ENCODE measurements at regions of chr3 and their contacts with region 1.

Region 1: GRCh38 chr3:129439817-129440617 is at the starts of genes IFT122 and MBD4:
- DNase-seq: peak; percentile 98 to 100 (median 100)
- H3K4me3 ChIP-seq: peak within 1 kb of the TSS; percentile 98 to 100
- H3K4me3 Mint-ChIP-seq: peak within 1 kb of the TSS; percentile 90 to 99 (median 94)
- H3K27ac ChIP-seq: peak within 1 kb of the TSS; percentile 91
- H3K27ac Mint-ChIP-seq: peak within 1 kb of the TSS; percentile 94 to 99 (median 98)
- H3K4me1 ChIP-seq: peaks cover 73% of the 10 kb centered on the region
- H3K4me1 Mint-ChIP-seq: peaks cover 45 to 81% (median 68%) of the 10 kb centered on the region in 4 donors
- H3K27me3 ChIP-seq: no peaks in the 10 kb centered on the region
- H3K27me3 Mint-ChIP-seq: no peaks in the 10 kb centered on the region
- total RNA-seq, gene IFT122: 20.0 to 21.8 TPM
- total RNA-seq, gene MBD4: 52.4 to 58.0 TPM

Region 2: DNA sequence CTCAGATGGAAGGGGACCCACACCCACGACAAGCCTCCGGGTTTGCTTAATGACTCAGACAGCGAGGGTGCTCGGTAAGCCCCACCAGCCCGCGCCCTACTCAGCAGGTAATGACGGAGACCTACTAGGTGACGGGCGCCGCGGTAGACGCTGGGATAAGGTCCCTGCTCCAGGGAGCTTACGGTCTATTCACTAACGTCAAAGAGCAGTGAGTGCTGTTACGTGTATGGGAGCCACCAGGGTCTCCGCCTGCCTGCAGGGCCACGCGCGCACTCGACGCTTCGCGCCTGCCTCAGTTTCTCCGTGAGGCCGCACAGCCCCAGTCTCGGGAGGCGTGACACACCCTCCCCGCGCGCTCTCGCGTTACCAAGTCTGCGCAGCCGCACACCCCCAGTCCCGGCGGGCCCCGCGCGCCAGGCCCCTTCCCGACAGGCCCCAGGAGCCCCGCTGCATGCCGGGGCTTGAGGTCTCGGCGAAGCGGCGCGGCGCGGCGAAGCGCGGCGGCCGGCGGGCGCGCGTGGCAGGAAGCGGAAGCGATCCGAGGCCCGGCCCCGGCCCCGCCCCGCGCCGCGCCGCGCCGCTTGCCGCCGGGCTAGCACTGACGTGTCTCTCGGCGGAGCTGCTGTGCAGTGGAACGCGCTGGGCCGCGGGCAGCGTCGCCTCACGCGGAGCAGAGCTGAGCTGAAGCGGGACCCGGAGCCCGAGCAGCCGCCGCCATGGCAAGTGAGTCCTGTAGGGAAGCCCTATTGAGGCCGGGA is 1388.0 kb before region 1 on chr3 and contains the start of gene SEC61A1:
- CTCF ChIA-PET with region 1: no interaction called
- POLR2A ChIA-PET with region 1: no interaction called
- intact Hi-C with region 1: loop called (anchors 5 kb)
- DNase-seq: peak; percentile 94 to 96 (median 95)
- H3K4me3 ChIP-seq: peak within 1 kb of the TSS; percentile 80 to 91
- H3K4me3 Mint-ChIP-seq: peak within 1 kb of the TSS; percentile 92 to 100 (median 98)
- H3K27ac ChIP-seq: peak within 1 kb of the TSS; percentile 93
- H3K27ac Mint-ChIP-seq: peak within 1 kb of the TSS; percentile 94 to 99 (median 98)
- H3K4me1 ChIP-seq: peaks cover 38% of the 10 kb centered on the region
- H3K4me1 Mint-ChIP-seq: peaks cover 35 to 58% (median 42%) of the 10 kb centered on the region in 4 donors
- H3K27me3 ChIP-seq: no peaks in the 10 kb centered on the region
- H3K27me3 Mint-ChIP-seq: no peaks in the 10 kb centered on the region
- total RNA-seq, gene SEC61A1: 203 to 212 TPM

Region 3: DNA sequence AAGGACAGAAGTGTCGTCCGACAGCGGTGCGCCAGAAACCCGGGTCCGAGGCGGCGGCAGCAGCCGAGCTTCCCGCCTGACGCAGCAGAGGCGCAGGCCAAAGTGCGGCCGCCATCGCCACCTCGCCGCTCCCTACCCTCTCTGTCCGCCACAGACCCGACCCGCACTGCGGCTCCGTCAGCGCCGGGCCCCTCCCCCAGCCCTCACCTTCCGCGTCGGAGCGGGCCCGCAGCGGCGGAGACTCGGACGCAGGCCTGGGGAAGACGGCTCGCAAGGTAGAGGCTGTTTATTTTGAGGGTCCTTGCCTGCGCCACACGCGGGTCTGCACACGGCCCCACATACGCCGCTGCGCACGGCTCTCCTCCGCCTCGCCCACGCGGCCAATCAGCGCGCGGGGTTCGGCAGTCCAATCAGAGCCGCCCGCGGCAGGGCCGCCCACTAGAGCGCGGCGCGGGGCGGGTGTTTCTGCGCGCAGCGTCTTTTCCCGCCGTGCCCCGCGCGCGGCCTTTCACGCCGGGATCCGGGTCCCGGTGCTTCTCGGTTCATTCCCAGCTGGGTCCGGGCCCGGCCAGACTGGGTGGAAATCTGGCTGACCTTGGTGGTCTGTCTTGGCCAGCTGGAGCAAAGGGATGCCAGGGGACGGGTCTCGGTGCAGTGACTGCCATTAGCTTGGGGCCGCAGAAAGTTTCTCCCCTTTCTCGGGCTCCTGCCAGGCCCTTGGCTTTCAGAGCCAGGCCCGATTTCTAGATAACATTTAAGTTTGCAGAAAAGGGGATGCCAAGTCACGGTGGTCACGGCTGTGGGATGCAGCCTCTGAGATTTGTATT is 256.2 kb before region 1 on chr3 and contains the start of gene CNBP:
- CTCF ChIA-PET with region 1: no interaction called
- POLR2A ChIA-PET with region 1: interaction called, 4 read pairs
- intact Hi-C with region 1: loop called (anchors 5 kb)
- DNase-seq: peak; percentile 90 to 95 (median 93)
- H3K4me3 ChIP-seq: peak within 1 kb of the TSS; percentile 51 to 93
- H3K4me3 Mint-ChIP-seq: peak within 1 kb of the TSS; percentile 89 to 99 (median 97)
- H3K27ac ChIP-seq: peak within 1 kb of the TSS; percentile 99
- H3K27ac Mint-ChIP-seq: peak within 1 kb of the TSS; percentile 91 to 99 (median 98)
- H3K4me1 ChIP-seq: peaks cover 41% of the 10 kb centered on the region
- H3K4me1 Mint-ChIP-seq: peaks cover 20 to 55% (median 31%) of the 10 kb centered on the region in 4 donors
- H3K27me3 ChIP-seq: no peaks in the 10 kb centered on the region
- H3K27me3 Mint-ChIP-seq: no peaks in the 10 kb centered on the region
- total RNA-seq, gene CNBP: 369 to 400 TPM

Region 4: GRCh38 chr3:129289201-129289921 is 150.7 kb before region 1 on chr3:
- CTCF ChIA-PET with region 1: no interaction called
- POLR2A ChIA-PET with region 1: no interaction called
- intact Hi-C with region 1: no loop called
- DNase-seq: no peak
- H3K4me3 ChIP-seq: no peak overlapping the region
- H3K4me3 Mint-ChIP-seq: no peak overlapping the region
- H3K27ac ChIP-seq: no peak overlapping the region
- H3K27ac Mint-ChIP-seq: peak overlapping the region in 2 of 7 donors; percentile 62 to 71
- H3K4me1 ChIP-seq: no peaks in the 10 kb centered on the region
- H3K4me1 Mint-ChIP-seq: peaks cover 9 to 13% (median 9%) of the 10 kb centered on the region in 4 donors
- H3K27me3 ChIP-seq: no peaks in the 10 kb centered on the region
- H3K27me3 Mint-ChIP-seq: no peaks in the 10 kb centered on the region

Region 5: GRCh38 chr3:129399145-129399894 is 40.7 kb before region 1 on chr3:
- CTCF ChIA-PET with region 1: interaction called, 9 read pairs
- POLR2A ChIA-PET with region 1: interaction called, 18 read pairs
- intact Hi-C with region 1: loop called (anchors 1 kb)
- DNase-seq: peak; percentile 83 to 88 (median 84)
- H3K4me3 ChIP-seq: peak overlapping the region; percentile 83 to 95
- H3K4me3 Mint-ChIP-seq: peak overlapping the region; percentile 97 to 100 (median 98)
- H3K27ac ChIP-seq: peak overlapping the region; percentile 70
- H3K27ac Mint-ChIP-seq: peak overlapping the region; percentile 98 to 100 (median 99)
- H3K4me1 ChIP-seq: peaks cover 28% of the 10 kb centered on the region
- H3K4me1 Mint-ChIP-seq: peaks cover 21 to 55% (median 32%) of the 10 kb centered on the region in 4 donors
- H3K27me3 ChIP-seq: no peaks in the 10 kb centered on the region
- H3K27me3 Mint-ChIP-seq: no peaks in the 10 kb centered on the region

Region 6: DNA sequence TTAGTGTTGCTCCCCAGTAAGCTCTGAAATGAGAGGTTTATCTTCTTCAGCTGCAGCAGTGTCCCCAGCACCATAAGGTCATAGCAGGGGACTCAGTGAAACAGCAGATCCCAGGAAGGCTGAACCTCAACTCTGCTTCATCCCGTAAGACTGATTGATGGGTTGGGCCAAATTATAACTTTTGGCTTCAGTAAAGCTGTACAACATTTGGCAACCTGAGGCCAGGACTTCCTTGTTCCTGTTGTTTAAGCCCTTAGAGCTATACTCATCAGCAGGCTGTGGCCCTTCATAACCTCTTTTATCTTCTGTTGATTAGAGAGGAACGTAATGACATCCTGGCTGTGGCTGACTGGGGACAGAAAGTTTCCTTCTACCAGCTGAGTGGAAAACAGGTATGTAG is 29.0 kb after region 1 on chr3:
- CTCF ChIA-PET with region 1: no interaction called
- POLR2A ChIA-PET with region 1: interaction called, 10 read pairs
- intact Hi-C with region 1: no loop called
- DNase-seq: peak in 3 of 5 donors; percentile 7 to 28 (median 23)
- H3K4me3 ChIP-seq: no peak overlapping the region
- H3K4me3 Mint-ChIP-seq: no peak overlapping the region
- H3K27ac ChIP-seq: no peak overlapping the region
- H3K27ac Mint-ChIP-seq: peak overlapping the region in 6 of 7 donors; percentile 18 to 77 (median 39)
- H3K4me1 ChIP-seq: peaks cover 13% of the 10 kb centered on the region
- H3K4me1 Mint-ChIP-seq: peaks cover 0 to 14% (median 8%) of the 10 kb centered on the region in 4 donors
- H3K27me3 ChIP-seq: no peaks in the 10 kb centered on the region
- H3K27me3 Mint-ChIP-seq: no peaks in the 10 kb centered on the region

Region 7: GRCh38 chr3:129576514-129577352 is 136.7 kb after region 1 on chr3:
- CTCF ChIA-PET with region 1: no interaction called
- POLR2A ChIA-PET with region 1: interaction called, 30 read pairs
- intact Hi-C with region 1: no loop called
- DNase-seq: peak; percentile 84 to 90 (median 89)
- H3K4me3 ChIP-seq: peak overlapping the region in 1 of 2 donors; percentile 12
- H3K4me3 Mint-ChIP-seq: peak overlapping the region in 7 of 8 donors; percentile 53 to 79 (median 71)
- H3K27ac ChIP-seq: peak overlapping the region; percentile 67
- H3K27ac Mint-ChIP-seq: peak overlapping the region; percentile 90 to 98 (median 98)
- H3K4me1 ChIP-seq: peaks cover 54% of the 10 kb centered on the region
- H3K4me1 Mint-ChIP-seq: peaks cover 17 to 58% (median 39%) of the 10 kb centered on the region in 4 donors
- H3K27me3 ChIP-seq: no peaks in the 10 kb centered on the region
- H3K27me3 Mint-ChIP-seq: no peaks in the 10 kb centered on the region

Region 8: GRCh38 chr3:129893581-129894070 is 453.6 kb after region 1 on chr3 and contains the start of gene TMCC1:
- CTCF ChIA-PET with region 1: no interaction called
- POLR2A ChIA-PET with region 1: interaction called, 4 read pairs
- intact Hi-C with region 1: loop called (anchors 1 kb)
- DNase-seq: peak; percentile 90 to 94 (median 92)
- H3K4me3 ChIP-seq: peak within 1 kb of the TSS; percentile 87 to 96
- H3K4me3 Mint-ChIP-seq: peak within 1 kb of the TSS; percentile 88 to 96 (median 92)
- H3K27ac ChIP-seq: peak within 1 kb of the TSS; percentile 82
- H3K27ac Mint-ChIP-seq: peak within 1 kb of the TSS; percentile 92 to 97 (median 93)
- H3K4me1 ChIP-seq: peaks cover 46% of the 10 kb centered on the region
- H3K4me1 Mint-ChIP-seq: peaks cover 23 to 47% (median 37%) of the 10 kb centered on the region in 4 donors
- H3K27me3 ChIP-seq: no peaks in the 10 kb centered on the region
- H3K27me3 Mint-ChIP-seq: peaks cover 0 to 1% of the 10 kb centered on the region in 2 donors
- total RNA-seq, gene TMCC1: 36.4 to 39.3 TPM

Region 9: GRCh38 chr3:130834476-130834875 is 1394.5 kb after region 1 on chr3:
- CTCF ChIA-PET with region 1: no interaction called
- POLR2A ChIA-PET with region 1: no interaction called
- intact Hi-C with region 1: no loop called
- DNase-seq: no peak
- H3K4me3 ChIP-seq: no peak overlapping the region
- H3K4me3 Mint-ChIP-seq: no peak overlapping the region
- H3K27ac ChIP-seq: no peak overlapping the region
- H3K27ac Mint-ChIP-seq: no peak overlapping the region
- H3K4me1 ChIP-seq: no peaks in the 10 kb centered on the region
- H3K4me1 Mint-ChIP-seq: peaks cover 0 to 2% (median 0%) of the 10 kb centered on the region in 4 donors
- H3K27me3 ChIP-seq: no peaks in the 10 kb centered on the region
- H3K27me3 Mint-ChIP-seq: peaks cover 1 to 3% of the 10 kb centered on the region in 2 donors